Motor neuron (in vitro differentiated cells): ENCODE measurements at regions of chr18 and their contacts with region 1.

Region 1: DNA sequence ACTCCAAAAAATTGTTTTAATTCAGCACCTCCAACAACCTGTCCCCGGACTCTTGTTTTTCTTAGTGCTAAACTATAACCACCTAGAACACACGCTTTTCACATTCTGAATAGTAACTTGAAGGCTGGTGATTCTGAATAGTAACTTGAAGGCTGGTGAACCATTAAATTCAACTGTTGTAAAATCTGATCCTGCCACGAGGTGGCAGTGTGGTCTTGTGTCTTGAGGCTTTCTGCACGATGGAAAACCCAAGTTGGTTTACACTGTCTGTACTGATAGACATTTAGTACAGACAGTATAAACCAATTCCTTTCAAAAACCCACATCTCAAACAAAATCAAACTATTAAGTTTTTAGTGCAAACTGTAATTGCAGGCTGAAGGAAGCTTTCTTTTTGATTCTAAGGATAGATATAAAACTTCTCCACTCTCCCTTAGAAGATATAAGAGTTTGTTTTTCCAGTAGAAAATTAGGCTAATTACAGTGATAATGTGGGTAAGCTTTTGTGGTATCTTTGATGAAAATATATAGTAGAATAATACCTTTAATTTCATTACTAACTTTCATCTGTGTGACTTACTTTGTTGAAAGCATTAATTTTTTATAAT is 57.6 kb downstream of the VAPA start:
- ATAC-seq: peak; percentile 48 to 85 (median 70)
- H3K4me3 ChIP-seq: no peak overlapping the region
- H3K27ac ChIP-seq: no peak overlapping the region
- H3K4me1 ChIP-seq: no peaks in the 10 kb centered on the region

Region 2: DNA sequence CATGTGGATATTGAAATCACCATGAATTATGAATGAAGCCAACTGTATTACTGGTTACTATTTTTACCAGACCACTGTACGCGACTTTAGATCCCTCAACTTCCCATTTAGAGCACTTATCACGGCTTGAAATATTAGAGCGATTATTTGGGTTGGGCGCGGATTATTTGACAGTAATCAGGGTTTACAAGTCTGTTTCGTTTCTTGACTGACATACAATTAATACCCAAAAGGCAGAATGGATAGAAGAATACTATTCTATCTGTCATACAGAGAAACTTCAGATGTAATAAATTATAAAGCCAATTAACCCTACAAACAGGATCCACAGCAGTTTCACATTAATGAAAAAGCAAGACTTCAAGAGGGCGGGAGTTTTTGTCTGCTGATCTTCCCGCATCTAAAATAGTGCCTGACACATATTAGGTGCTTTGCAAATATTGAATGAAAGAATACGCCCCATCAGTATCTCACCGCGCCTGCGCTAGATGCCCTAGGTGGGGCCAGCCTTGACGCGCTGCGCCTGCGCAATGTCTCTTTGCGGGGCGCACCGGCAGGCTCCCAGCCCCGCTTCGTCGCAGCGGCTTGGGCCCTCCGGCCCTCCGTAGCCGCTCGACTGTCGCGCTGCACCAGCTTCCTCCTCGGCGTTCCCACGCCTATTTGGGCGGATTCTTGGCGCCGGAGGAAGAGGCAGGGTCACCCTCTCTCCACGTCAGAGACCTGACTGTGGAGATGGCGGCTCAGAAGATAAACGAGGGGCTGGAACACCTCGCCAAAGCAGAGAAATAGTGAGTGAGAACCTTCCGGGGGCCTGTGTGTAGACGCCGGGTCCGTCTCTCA is 554.2 kb after region 1 on chr18 and contains the start of gene NAPG:
- in situ Hi-C with region 1: loop called in 5 of 9 experiments (anchors 10 to 25 kb)
- ATAC-seq: peak; percentile 86 to 93 (median 88)
- H3K4me3 ChIP-seq: peak within 1 kb of the TSS; percentile 69 to 89 (median 76)
- H3K27ac ChIP-seq: peak within 1 kb of the TSS; percentile 88 to 91
- H3K4me1 ChIP-seq: peaks cover 6 to 9% of the 10 kb centered on the region in 2 donors
- total RNA-seq, gene NAPG: 31.9 to 67.9 (median 52.1) TPM